Activated naive CD4-positive, alpha-beta T cell treated with anti-CD3 and anti-CD28 coated beads for 36 hours (primary cell): ENCODE measurements at regions of chr7 and their contacts with region 1.

Region 1: GRCh38 chr7:8217200-8218068 is 44.5 kb downstream of the ICA1 start:
- DNase-seq: peak; percentile 8
- H3K4me3 Mint-ChIP-seq: no peak overlapping the region
- H3K27ac Mint-ChIP-seq: no peak overlapping the region
- H3K4me1 Mint-ChIP-seq: peaks cover 2% of the 10 kb centered on the region
- H3K27me3 Mint-ChIP-seq: no peaks in the 10 kb centered on the region

Region 2: DNA sequence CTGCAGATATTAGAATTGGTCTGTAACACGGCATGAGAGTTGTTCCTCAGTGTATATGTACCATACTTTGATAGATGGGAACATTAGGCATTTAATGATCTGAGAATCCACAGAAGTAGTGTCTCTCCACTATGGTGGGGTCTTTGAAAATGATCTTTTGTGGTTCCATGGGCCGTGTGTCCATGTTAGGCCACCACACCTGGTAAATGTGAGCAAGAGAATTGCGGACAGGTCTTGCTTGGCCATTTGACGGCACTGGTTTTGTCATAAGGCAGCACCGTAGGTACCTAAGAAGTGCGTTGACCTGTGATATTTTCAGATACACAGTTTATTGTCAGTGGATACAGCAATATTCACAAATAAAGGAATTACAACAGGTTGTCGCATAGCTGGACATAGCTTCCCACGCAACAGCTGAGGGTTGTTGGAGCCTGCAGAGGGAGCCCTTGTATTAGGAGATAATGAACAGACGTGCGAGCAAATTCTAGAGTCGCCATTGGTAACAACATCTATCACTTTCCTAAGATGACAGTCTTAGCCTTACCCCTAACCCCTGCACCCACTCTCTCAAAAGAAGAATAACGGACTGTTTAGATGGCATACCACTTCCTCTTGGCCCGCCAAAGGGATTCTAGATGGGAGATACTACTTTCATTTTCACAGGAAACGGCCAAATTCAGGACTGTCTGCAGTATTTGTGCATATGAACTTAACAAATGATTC is 793.1 kb before region 1 on chr7:
- CTCF ChIA-PET with region 1: interaction called, 3 read pairs
- intact Hi-C with region 1: loop called (anchors 2 kb)
- DNase-seq: peak; percentile 52
- H3K4me3 Mint-ChIP-seq: peak overlapping the region; percentile 42
- H3K27ac Mint-ChIP-seq: no peak overlapping the region
- H3K4me1 Mint-ChIP-seq: no peaks in the 10 kb centered on the region
- H3K27me3 Mint-ChIP-seq: no peaks in the 10 kb centered on the region

Region 3: DNA sequence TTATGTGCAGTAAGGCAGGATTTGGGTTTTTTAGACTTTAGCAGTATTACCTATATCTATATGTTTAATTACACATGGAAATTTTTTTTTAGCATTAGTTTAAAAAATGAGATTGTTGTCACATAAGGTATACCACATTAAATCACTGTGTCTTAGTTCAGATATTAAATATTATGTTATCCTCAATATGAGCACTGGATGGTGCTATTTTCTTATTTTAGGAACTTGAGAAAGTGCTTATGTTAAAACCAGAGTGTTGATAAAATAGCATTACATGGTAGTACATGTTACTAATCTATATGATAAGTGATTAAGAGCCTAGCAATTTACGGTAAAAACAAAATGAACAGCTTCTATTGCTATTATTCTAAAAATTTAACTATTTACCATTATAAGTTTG is 622.0 kb before region 1 on chr7:
- CTCF ChIA-PET with region 1: no interaction called
- intact Hi-C with region 1: loop called (anchors 1 kb)
- DNase-seq: no peak
- H3K4me3 Mint-ChIP-seq: no peak overlapping the region
- H3K27ac Mint-ChIP-seq: no peak overlapping the region
- H3K4me1 Mint-ChIP-seq: peaks cover 3% of the 10 kb centered on the region
- H3K27me3 Mint-ChIP-seq: no peaks in the 10 kb centered on the region

Region 4: GRCh38 chr7:8035647-8036518 is 181.6 kb before region 1 on chr7:
- CTCF ChIA-PET with region 1: interaction called, 3 read pairs
- intact Hi-C with region 1: loop called (anchors 1 kb)
- DNase-seq: no peak
- H3K4me3 Mint-ChIP-seq: no peak overlapping the region
- H3K27ac Mint-ChIP-seq: no peak overlapping the region
- H3K4me1 Mint-ChIP-seq: peaks cover 20% of the 10 kb centered on the region
- H3K27me3 Mint-ChIP-seq: no peaks in the 10 kb centered on the region

Region 5: GRCh38 chr7:8303904-8304528 is 86.6 kb after region 1 on chr7:
- CTCF ChIA-PET with region 1: no interaction called
- intact Hi-C with region 1: no loop called
- DNase-seq: no peak
- H3K4me3 Mint-ChIP-seq: no peak overlapping the region
- H3K27ac Mint-ChIP-seq: no peak overlapping the region
- H3K4me1 Mint-ChIP-seq: no peaks in the 10 kb centered on the region
- H3K27me3 Mint-ChIP-seq: no peaks in the 10 kb centered on the region

Region 6: DNA sequence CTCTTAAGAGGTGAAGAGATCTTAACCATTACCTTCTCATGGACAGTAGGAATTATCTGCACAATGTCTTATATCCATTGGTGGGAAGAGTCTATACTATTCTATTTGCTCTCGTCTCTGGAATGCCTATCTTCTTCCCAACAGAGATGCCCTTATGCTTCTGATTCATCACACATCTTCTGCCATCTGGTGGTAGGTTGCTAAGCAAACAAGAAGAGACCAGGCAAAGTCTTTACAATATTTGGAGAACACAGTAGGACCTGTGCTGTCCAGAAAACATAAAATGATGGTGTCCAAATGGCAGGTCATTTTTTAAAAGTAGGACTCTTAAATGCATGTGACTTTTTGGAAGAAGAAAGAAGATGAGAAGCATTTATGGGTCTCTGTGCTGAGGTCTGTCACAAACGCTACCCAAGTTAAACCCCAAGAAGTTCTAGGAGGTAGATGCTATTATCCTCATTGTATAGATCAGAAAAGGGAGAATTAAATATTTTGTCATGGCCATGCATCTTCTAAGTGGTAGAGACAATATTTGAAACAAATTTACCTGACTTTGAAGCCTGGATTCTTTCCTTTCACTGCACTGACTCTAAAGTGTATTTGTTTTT is 148.2 kb after region 1 on chr7:
- CTCF ChIA-PET with region 1: no interaction called
- intact Hi-C with region 1: no loop called
- DNase-seq: no peak
- H3K4me3 Mint-ChIP-seq: no peak overlapping the region
- H3K27ac Mint-ChIP-seq: no peak overlapping the region
- H3K4me1 Mint-ChIP-seq: no peaks in the 10 kb centered on the region
- H3K27me3 Mint-ChIP-seq: peaks cover 14% of the 10 kb centered on the region

Region 7: GRCh38 chr7:8627325-8627724 is 409.9 kb after region 1 on chr7:
- CTCF ChIA-PET with region 1: no interaction called
- intact Hi-C with region 1: no loop called
- DNase-seq: no peak
- H3K4me3 Mint-ChIP-seq: no peak overlapping the region
- H3K27ac Mint-ChIP-seq: no peak overlapping the region
- H3K4me1 Mint-ChIP-seq: no peaks in the 10 kb centered on the region
- H3K27me3 Mint-ChIP-seq: no peaks in the 10 kb centered on the region